ENCODE measurements at regions of chr17 and their contacts with region 1.

Region 1: DNA sequence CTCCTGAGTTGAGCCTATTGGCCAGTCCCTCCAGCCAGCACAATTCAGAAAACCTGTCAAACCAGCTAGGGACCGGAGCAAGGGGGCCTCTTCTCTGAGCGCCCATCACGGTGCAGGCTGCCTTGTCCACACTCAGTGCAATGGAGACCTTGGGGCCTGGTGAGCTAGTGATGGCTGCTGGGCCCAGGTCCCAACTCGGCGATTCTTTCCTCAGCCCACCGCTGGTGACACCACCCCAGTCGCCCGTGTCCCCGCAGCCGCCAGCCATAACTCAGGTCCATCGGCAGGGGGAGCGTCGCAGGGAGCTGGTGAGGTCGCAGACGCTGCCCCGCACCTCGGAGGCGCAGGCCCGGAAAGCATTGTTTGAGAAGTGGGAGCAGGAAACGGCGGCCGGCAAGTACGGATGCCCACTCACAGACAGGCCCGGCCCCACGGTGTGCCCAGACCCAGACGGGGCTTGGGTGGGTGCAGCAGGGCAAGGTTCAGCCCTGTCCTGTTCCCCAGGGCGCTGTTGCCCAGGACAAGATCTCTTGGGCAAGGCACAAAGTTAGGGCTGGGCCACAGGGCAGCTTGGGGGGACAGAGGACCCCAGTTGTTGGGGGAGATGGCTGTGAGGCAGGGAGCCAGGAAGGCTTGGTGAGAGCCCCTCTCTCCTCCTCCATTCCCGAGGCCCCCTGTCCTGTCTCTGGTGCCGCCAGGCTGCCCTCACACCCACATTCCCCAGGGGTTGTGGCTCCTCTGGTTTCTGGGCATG is 10.8 kb downstream of the SMTNL2 start:
- DNase-seq: peak in 1 of 2 experiments; percentile 79
- H3K4me3 ChIP-seq: no peak overlapping the region
- H3K27ac ChIP-seq: no peak overlapping the region
- H3K4me1 ChIP-seq: peaks cover under 1 to 25% (median 15%) of the 10 kb centered on the region in 4 experiments
- H3K27me3 ChIP-seq: no peaks in the 10 kb centered on the region
- CTCF ChIP-seq: peak; percentile 57 to 76 (median 69)
- EP300 ChIP-seq: no peak
- POLR2A ChIP-seq: no peak
- RAD21 ChIP-seq: peak; percentile 35 to 51; a peak in 3 of 4 replicates

Region 2: DNA sequence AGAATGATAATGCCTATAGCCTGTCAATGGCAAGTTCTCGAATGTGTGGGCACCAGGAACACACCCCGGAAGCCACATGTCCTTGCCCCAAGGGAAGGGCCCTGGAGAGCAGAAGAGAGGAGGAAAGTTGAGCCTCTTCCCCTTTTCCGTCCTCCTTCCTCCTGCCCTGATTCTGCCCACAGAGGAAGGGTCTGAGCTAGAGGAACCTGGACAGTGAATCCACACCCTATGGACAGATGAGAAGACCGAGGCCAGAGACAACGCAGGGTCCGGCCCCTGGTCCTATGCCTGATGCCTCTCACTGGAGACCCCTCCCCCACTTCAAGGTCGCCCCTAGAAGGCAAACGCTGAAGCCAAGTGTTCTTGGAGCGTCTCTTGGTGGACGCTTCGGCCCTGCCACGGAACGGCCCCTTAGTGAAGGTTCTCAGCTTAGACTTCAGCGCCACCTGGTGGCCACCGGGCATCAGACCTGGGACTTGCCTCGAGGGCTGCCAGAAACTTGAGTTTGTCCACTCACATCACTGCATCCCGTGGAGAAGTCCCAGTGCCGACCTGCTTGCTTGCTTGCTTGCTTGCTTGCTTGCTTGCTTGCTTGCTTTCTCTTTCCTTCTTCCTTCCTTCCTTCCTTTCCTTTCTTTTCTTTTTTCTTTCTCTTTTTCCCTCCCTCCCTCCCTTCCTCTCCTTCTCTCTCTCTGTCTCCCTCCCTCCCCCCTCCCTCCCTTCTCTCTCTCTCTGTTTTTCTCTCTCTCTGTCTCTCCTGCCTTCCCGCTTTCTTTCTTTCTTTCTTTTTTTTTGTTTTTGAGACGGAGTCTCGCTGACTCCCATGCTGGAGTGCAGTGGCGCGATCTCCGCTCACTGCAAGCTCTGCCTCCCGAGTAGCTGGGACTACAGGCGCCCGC is 181.9 kb before region 1 on chr17:
- CTCF ChIA-PET with region 1: no interaction called
- POLR2A ChIA-PET with region 1: no interaction called
- DNase-seq: peak; percentile 91 to 99
- H3K4me3 ChIP-seq: no peak overlapping the region
- H3K27ac ChIP-seq: no peak overlapping the region
- H3K4me1 ChIP-seq: peaks cover 0 to 4% (median 2%) of the 10 kb centered on the region in 4 experiments; a peak in 4 of 7 replicates
- H3K27me3 ChIP-seq: no peaks in the 10 kb centered on the region
- CTCF ChIP-seq: peak; percentile 87 to 99 (median 99)
- EP300 ChIP-seq: peak in 1 of 2 experiments; percentile 51; a peak in 1 of 3 replicates
- POLR2A ChIP-seq: no peak
- RAD21 ChIP-seq: peak; percentile 99 to 100

Region 3: GRCh38 chr17:4576729-4577322 is 18.3 kb before region 1 on chr17:
- CTCF ChIA-PET with region 1: interaction called, 65 read pairs
- POLR2A ChIA-PET with region 1: interaction called, 11 read pairs
- DNase-seq: peak in 1 of 2 experiments; percentile 67
- H3K4me3 ChIP-seq: no peak overlapping the region; a peak in 1 of 8 replicates
- H3K27ac ChIP-seq: no peak overlapping the region
- H3K4me1 ChIP-seq: peaks cover 4 to 19% (median 14%) of the 10 kb centered on the region in 4 experiments
- H3K27me3 ChIP-seq: no peaks in the 10 kb centered on the region
- CTCF ChIP-seq: no peak
- EP300 ChIP-seq: no peak
- POLR2A ChIP-seq: no peak
- RAD21 ChIP-seq: peak in 1 of 2 experiments; percentile 16; a peak in 1 of 4 replicates

Region 4: DNA sequence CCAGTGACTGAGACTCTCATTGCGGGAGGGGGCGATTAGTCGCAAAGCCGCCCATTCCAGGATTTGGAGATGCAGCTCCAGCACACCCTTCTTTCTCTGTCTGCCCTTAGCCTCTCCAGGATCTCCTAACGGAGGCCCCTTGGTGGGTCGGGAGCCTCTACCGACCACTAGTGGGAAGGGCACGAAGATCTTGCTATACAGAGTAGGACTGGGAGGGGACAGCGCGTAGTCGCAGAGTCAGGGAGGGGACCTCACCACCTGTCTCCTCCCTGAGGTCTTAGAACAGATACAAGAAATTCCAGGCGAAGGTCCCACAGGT is 11.4 kb before region 1 on chr17:
- CTCF ChIA-PET with region 1: interaction called, 65 read pairs
- POLR2A ChIA-PET with region 1: interaction called, 6 read pairs
- DNase-seq: no peak
- H3K4me3 ChIP-seq: peak overlapping the region; percentile 45 to 69 (median 58)
- H3K27ac ChIP-seq: no peak overlapping the region
- H3K4me1 ChIP-seq: peaks cover 0 to 18% (median 13%) of the 10 kb centered on the region in 4 experiments; a peak in 6 of 7 replicates
- H3K27me3 ChIP-seq: peaks cover 8 to 45% (median 38%) of the 10 kb centered on the region in 4 experiments
- CTCF ChIP-seq: peak; percentile 38 to 61 (median 48); a peak in 3 of 4 replicates
- EP300 ChIP-seq: no peak
- POLR2A ChIP-seq: no peak
- RAD21 ChIP-seq: peak in 1 of 2 experiments; percentile 10; a peak in 2 of 4 replicates

Region 5: GRCh38 chr17:4607773-4608187 is 12.7 kb after region 1 on chr17:
- CTCF ChIA-PET with region 1: interaction called, 11 read pairs
- POLR2A ChIA-PET with region 1: interaction called, 8 read pairs
- DNase-seq: no peak
- H3K4me3 ChIP-seq: no peak overlapping the region
- H3K27ac ChIP-seq: no peak overlapping the region
- H3K4me1 ChIP-seq: peaks cover 0 to 10% (median 2%) of the 10 kb centered on the region in 4 experiments; a peak in 3 of 7 replicates
- H3K27me3 ChIP-seq: no peaks in the 10 kb centered on the region; a peak in 1 of 7 replicates
- CTCF ChIP-seq: no peak
- EP300 ChIP-seq: no peak
- POLR2A ChIP-seq: no peak
- RAD21 ChIP-seq: no peak

Region 6: GRCh38 chr17:4616476-4616875 is 21.4 kb after region 1 on chr17:
- CTCF ChIA-PET with region 1: interaction called, 14 read pairs
- POLR2A ChIA-PET with region 1: no interaction called
- DNase-seq: no peak
- H3K4me3 ChIP-seq: no peak overlapping the region
- H3K27ac ChIP-seq: no peak overlapping the region
- H3K4me1 ChIP-seq: peaks cover 0 to 6% (median 0%) of the 10 kb centered on the region in 4 experiments; a peak in 2 of 7 replicates
- H3K27me3 ChIP-seq: 0 out of 7 replicates have a peak, but pooled peaks cover 0 to 2% (median 0%) of the 10 kb centered on the region in 4 experiments
- CTCF ChIP-seq: no peak
- EP300 ChIP-seq: no peak
- POLR2A ChIP-seq: no peak
- RAD21 ChIP-seq: no peak

Region 7: GRCh38 chr17:4625181-4625617 is 30.1 kb after region 1 on chr17:
- CTCF ChIA-PET with region 1: interaction called, 65 read pairs
- POLR2A ChIA-PET with region 1: interaction called, 3 read pairs
- DNase-seq: no peak
- H3K4me3 ChIP-seq: no peak overlapping the region
- H3K27ac ChIP-seq: no peak overlapping the region
- H3K4me1 ChIP-seq: no peaks in the 10 kb centered on the region; a peak in 1 of 7 replicates
- H3K27me3 ChIP-seq: 0 out of 7 replicates have a peak, but pooled peaks cover 0 to 2% (median 0%) of the 10 kb centered on the region in 4 experiments
- CTCF ChIP-seq: no peak
- EP300 ChIP-seq: no peak
- POLR2A ChIP-seq: no peak
- RAD21 ChIP-seq: no peak